ENCODE measurements at regions of chr15 and their contacts with region 1.

Region 1: DNA sequence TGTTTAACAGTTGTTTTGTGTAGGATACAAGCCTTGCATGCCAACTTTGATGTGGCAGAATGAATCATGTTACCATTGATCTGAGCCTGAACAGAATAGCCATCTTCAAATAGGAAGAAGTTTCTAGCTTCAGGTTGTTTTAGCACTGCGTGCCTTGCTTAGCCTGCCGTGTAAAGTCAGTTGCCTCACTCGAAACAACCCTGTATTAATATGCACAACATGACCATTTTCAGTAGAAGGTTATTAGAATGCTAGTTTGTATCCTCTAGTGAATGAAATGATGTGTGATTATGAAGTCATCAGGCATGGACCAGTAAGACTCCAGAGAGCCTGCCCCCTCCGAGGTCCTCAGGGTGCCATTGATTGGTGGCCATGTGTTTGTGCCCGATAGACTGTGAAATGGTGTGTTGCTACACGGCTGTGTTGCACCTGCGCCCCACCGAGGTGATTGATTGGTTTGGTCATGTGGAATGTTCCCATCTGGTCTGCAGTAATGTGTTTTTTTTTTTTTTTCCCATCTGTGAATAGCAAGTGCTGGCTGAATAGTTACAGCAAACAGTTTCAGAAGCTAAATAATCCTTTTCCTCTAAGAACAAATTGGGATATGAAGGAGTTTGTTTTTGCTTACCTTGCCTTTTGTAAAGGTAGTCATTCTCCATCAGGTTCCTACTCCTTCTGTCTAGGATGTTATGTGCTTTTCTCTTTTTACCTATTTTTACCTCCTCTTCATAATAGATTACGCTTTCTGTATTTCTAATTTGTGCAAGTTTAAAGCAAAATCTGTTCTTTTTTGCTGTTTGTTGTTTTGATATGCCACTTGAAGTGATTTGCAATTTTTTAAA is 214.9 kb downstream of the TCF12 start:
- DNase-seq: peak; percentile 57
- H3K4me3 ChIP-seq: no peak overlapping the region
- H3K27ac ChIP-seq: no peak overlapping the region
- H3K4me1 ChIP-seq: peaks cover 43% of the 10 kb centered on the region
- H3K27me3 ChIP-seq: no peaks in the 10 kb centered on the region
- CTCF ChIP-seq: no peak
- POLR2A ChIP-seq: no peak

Region 2: DNA sequence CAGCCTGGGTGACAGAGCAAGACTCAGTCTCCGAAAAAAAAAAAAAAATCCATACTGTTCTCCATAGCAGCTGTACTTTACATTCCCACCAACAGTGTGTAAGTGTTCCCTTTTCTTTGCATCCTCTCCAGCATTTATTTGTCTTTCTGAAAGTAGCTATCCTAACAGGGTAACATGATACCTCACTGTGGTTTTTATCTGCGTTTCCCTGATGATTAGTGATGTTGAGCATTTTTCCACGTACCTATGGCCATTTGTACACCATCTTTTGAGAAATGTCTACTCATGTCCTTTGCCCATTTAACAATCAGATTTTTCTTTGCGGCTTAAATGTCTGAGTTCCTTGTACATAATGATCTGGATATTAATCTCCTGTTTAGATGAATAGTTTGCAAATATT is 1009.0 kb before region 1 on chr15:
- CTCF ChIA-PET with region 1: no interaction called
- POLR2A ChIA-PET with region 1: no interaction called
- dilution Hi-C with region 1: no loop called
- intact Hi-C with region 1: loop called (anchors 5 kb)
- DNase-seq: no peak
- H3K4me3 ChIP-seq: no peak overlapping the region
- H3K27ac ChIP-seq: no peak overlapping the region
- H3K4me1 ChIP-seq: no peaks in the 10 kb centered on the region
- H3K27me3 ChIP-seq: no peaks in the 10 kb centered on the region
- CTCF ChIP-seq: no peak
- POLR2A ChIP-seq: no peak

Region 3: DNA sequence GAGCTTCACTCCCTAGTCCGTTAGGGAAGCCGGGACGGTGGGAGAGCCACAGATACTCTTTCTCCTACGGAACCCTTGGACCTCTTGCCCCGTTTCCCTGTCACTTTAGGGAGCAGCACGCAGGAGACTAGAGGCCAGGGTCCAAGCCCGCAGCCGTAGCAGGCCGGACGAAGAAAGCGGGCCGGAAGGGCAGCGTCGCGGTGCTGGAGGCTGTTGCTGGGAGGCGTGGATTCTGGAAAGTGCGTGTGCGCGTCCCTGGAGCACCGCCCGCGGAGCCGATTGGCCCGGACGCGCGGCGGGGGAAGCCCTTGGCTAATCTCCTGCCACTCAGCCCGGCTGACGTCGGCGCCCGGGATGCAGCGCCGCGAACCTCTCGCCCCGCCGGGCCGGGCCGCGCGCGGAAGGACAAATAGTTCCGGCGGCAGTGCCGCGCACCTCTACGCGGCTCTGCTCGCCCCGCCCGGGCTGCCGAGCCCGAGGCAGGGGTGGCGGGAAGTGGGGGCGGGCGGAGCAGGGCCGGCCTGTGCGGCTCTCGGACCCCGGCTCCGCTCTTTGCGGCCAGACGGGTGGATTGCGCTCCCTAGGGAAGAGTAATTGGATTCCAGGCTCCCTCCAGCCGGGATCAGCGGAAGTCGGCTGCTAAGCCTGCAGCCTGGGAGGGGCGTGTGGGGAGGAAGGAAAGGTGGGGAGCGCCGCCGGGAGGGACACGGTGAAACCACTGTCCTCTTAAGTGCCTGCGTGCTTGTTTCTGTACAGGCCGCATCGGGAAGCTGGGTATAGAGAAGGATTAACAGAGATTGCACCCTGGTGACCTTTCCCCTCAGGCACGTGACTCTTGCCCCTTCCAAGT is 246.2 kb before region 1 on chr15:
- CTCF ChIA-PET with region 1: no interaction called
- POLR2A ChIA-PET with region 1: no interaction called
- dilution Hi-C with region 1: no loop called
- intact Hi-C with region 1: loop called (anchors 2 kb)
- DNase-seq: peak; percentile 91
- H3K4me3 ChIP-seq: peak overlapping the region; percentile 23 to 79 (median 67)
- H3K27ac ChIP-seq: peak overlapping the region; percentile 73
- H3K4me1 ChIP-seq: peaks cover 15% of the 10 kb centered on the region
- H3K27me3 ChIP-seq: no peaks in the 10 kb centered on the region
- CTCF ChIP-seq: peak in 1 of 2 donors; percentile 4
- POLR2A ChIP-seq: peak; percentile 81

Region 4: GRCh38 chr15:57060799-57061198 is 72.5 kb before region 1 on chr15:
- CTCF ChIA-PET with region 1: interaction called, 4 read pairs
- POLR2A ChIA-PET with region 1: no interaction called
- dilution Hi-C with region 1: no loop called
- intact Hi-C with region 1: loop called (anchors 2 kb)
- DNase-seq: peak; percentile 89
- H3K4me3 ChIP-seq: peak overlapping the region in 1 of 3 experiments; percentile 13
- H3K27ac ChIP-seq: peak overlapping the region; percentile 99
- H3K4me1 ChIP-seq: peaks cover 57% of the 10 kb centered on the region
- H3K27me3 ChIP-seq: no peaks in the 10 kb centered on the region
- CTCF ChIP-seq: no peak
- POLR2A ChIP-seq: no peak

Region 5: DNA sequence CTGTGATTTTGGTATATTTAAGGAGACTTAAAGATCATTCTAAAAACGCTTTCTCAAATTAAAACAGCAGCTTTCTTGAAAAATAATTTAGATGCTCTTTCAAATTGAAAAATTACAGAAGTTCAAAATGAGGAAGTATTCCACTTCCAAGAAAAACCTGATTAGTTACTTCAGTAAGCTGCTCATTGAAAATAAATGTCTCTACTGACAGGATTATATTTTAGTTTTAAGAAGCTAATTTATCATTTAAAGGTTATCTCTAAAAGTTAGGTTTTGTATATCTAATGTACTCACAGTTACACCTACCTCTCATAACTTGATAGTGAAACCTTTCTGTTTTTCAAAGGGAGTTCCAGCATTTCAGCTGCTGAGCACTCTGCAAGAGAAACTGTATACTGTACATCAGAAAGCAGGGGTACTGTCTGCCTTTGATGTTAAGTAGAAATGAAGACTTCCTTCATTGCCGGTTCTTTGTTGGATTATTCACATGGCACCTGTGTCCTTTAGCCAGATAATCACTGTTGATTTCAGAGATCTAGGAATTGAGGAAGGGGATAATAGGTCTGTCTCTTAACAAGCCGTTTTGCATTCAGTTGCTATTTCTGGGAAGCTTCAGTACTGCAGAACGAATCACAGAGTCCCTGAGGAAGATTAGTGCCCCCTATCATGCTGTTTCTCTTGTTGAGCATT is 53.3 kb before region 1 on chr15:
- CTCF ChIA-PET with region 1: interaction called, 6 read pairs
- POLR2A ChIA-PET with region 1: no interaction called
- dilution Hi-C with region 1: no loop called
- intact Hi-C with region 1: loop called (anchors 5 kb)
- DNase-seq: no peak
- H3K4me3 ChIP-seq: no peak overlapping the region
- H3K27ac ChIP-seq: no peak overlapping the region
- H3K4me1 ChIP-seq: peaks cover 32% of the 10 kb centered on the region
- H3K27me3 ChIP-seq: no peaks in the 10 kb centered on the region
- CTCF ChIP-seq: no peak
- POLR2A ChIP-seq: no peak

Region 6: GRCh38 chr15:57251941-57252340 is 118.6 kb after region 1 on chr15:
- CTCF ChIA-PET with region 1: no interaction called
- POLR2A ChIA-PET with region 1: no interaction called
- dilution Hi-C with region 1: no loop called
- intact Hi-C with region 1: no loop called
- DNase-seq: no peak
- H3K4me3 ChIP-seq: no peak overlapping the region
- H3K27ac ChIP-seq: no peak overlapping the region
- H3K4me1 ChIP-seq: no peaks in the 10 kb centered on the region
- H3K27me3 ChIP-seq: no peaks in the 10 kb centered on the region
- CTCF ChIP-seq: no peak
- POLR2A ChIP-seq: no peak

Measured in endothelial cell of umbilical vein (primary cell).